K562 (cell line): ENCODE measurements at regions of chr2 and their contacts with region 1.

Region 1: DNA sequence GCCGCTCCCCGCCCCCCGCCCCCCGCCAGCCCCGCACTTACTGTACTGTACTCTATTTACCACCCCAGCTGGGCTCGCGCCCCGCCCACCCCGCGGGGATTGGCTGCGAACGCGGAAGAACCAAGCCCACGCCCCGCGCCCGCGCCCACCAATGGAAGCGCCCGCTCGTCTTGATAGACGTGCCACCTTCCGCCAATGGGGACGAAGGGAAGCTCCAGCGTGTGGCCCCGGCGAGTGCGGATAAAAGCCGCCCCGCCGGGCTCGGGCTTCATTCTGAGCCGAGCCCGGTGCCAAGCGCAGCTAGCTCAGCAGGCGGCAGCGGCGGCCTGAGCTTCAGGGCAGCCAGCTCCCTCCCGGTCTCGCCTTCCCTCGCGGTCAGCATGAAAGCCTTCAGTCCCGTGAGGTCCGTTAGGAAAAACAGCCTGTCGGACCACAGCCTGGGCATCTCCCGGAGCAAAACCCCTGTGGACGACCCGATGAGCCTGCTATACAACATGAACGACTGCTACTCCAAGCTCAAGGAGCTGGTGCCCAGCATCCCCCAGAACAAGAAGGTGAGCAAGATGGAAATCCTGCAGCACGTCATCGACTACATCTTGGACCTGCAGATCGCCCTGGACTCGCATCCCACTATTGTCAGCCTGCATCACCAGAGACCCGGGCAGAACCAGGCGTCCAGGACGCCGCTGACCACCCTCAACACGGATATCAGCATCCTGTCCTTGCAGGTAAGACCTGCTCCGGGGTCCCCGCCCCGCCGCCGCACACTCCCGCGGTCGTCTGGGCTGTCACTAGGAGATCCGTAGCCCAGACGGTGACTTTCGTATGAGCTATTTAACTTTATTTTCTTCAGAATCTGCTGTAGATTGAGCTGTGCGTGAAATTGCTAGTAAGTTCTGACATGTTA is at the start of gene ID2:
- DNase-seq: peak; percentile 97 to 99 (median 98)
- ATAC-seq: peak; percentile 75
- H3K4me3 ChIP-seq: peak within 1 kb of the TSS; percentile 68
- H3K27ac ChIP-seq: peak within 1 kb of the TSS; percentile 56; the same call in 2 of the 3 replicates
- H3K4me1 ChIP-seq: peaks cover 34 to 47% of the 10 kb centered on the region in 2 experiments
- H3K27me3 ChIP-seq: no peaks in the 10 kb centered on the region
- CTCF ChIP-seq: 0 out of 6 replicates have a peak, but pooled peaks of 1 of the 3 experiments have one; percentile 3
- EP300 ChIP-seq: 0 out of 2 replicates have a peak, but pooled peaks have one; percentile 5
- POLR2A ChIP-seq: peak; percentile 99
- RAD21 ChIP-seq: peak in 1 of 2 experiments; percentile 32; a peak in 2 of 4 replicates
- polyA plus RNA-seq, gene ID2: 17.4 to 23.1 TPM

Region 2: DNA sequence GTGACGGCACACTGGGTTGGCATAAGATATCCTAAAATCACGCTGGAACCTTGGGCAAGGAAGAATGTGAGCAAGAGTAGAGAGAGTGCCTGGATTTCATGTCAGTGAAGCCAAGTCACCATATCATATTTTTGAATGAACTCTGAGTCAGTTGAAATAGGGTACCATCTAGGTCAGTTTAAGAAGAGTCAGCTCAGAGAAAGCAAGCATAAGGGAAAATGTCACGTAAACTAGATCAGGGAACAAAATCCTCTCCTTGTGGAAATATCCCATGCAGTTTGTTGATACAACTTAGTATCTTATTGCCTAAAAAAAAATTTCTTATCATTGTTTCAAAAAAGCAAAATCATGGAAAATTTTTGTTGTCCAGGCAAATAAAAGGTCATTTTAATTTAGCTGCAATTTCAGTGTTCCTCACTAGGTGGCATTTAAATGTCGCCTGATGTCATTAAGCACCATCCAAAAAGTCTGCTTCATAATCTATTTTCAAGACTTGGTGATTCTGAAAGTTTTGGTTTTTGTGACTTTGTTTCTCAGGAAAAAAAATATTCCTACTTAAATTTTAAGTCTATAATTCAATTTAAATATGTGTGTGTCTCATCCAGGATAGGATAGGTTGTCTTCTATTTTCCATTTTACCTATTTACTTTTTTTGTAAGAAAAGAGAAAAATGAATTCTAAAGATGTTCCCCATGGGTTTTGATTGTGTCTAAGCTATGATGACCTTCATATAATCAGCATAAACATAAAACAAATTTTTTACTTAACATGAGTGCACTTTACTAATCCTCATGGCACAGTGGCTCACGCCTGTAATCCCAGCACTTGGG is 1784.9 kb before region 1 on chr2:
- CTCF ChIA-PET with region 1: no interaction called
- POLR2A ChIA-PET with region 1: no interaction called
- in situ Hi-C with region 1: no loop called
- intact Hi-C with region 1: loop called (anchors 5 kb)
- DNase-seq: peak in 3 of 4 experiments; percentile 36 to 67 (median 39)
- ATAC-seq: peak; percentile 63
- H3K4me3 ChIP-seq: no peak overlapping the region
- H3K27ac ChIP-seq: no peak overlapping the region
- H3K4me1 ChIP-seq: peaks cover 4 to 13% of the 10 kb centered on the region in 2 experiments; a peak in 4 of 5 replicates
- H3K27me3 ChIP-seq: no peaks in the 10 kb centered on the region
- CTCF ChIP-seq: peak; percentile 48 to 87 (median 64); a peak in 5 of 6 replicates
- EP300 ChIP-seq: no peak
- POLR2A ChIP-seq: no peak
- RAD21 ChIP-seq: peak; percentile 84 to 90

Region 3: DNA sequence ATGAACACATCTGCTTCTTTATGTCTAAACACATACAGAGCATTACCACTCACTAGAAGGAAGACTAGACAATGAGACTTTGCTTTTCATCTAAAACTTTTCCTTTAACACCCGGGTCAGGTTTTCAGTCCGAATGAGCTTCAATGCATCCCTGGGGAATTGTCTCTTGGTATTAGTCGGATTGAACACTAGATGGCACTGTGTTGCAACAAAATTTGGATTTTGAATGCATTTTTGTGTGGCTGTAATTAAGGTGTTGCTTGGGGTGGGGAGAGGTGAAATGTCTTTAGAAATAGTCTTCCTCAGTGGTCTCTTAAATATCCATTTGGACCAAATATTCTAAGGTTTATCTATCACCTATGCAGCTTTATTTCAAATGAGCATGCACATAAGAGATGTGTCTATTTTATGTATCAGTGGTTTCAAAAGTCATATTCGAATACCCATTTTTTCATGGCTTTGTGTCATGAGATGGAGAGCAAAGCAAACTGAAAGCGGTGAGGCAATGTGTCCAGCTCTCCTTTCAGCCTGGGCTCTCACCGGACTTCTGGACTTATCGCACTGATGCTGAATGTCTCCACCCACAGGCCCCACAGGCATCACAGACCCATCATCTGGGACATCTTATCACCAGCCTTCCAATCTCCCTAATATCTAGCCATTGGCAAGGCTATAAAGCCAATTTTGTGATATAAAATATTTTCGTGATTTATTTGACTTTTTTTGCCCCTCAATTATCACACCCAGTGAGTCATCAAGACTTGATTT is 1254.6 kb before region 1 on chr2:
- CTCF ChIA-PET with region 1: interaction called, 3 read pairs
- POLR2A ChIA-PET with region 1: interaction called, 3 read pairs
- in situ Hi-C with region 1: loop called (anchors 10 kb)
- intact Hi-C with region 1: loop called (anchors 2 kb)
- DNase-seq: peak; percentile 51 to 55 (median 54)
- ATAC-seq: peak; percentile 85
- H3K4me3 ChIP-seq: no peak overlapping the region
- H3K27ac ChIP-seq: no peak overlapping the region
- H3K4me1 ChIP-seq: peaks cover 0 to 7% of the 10 kb centered on the region in 2 experiments; a peak in 1 of 5 replicates
- H3K27me3 ChIP-seq: peaks cover 0 to 17% of the 10 kb centered on the region in 2 experiments; a peak in 1 of 5 replicates
- CTCF ChIP-seq: peak; percentile 52 to 68 (median 60); a peak in 5 of 6 replicates
- EP300 ChIP-seq: no peak
- POLR2A ChIP-seq: no peak
- RAD21 ChIP-seq: peak; percentile 71 to 73

Region 4: DNA sequence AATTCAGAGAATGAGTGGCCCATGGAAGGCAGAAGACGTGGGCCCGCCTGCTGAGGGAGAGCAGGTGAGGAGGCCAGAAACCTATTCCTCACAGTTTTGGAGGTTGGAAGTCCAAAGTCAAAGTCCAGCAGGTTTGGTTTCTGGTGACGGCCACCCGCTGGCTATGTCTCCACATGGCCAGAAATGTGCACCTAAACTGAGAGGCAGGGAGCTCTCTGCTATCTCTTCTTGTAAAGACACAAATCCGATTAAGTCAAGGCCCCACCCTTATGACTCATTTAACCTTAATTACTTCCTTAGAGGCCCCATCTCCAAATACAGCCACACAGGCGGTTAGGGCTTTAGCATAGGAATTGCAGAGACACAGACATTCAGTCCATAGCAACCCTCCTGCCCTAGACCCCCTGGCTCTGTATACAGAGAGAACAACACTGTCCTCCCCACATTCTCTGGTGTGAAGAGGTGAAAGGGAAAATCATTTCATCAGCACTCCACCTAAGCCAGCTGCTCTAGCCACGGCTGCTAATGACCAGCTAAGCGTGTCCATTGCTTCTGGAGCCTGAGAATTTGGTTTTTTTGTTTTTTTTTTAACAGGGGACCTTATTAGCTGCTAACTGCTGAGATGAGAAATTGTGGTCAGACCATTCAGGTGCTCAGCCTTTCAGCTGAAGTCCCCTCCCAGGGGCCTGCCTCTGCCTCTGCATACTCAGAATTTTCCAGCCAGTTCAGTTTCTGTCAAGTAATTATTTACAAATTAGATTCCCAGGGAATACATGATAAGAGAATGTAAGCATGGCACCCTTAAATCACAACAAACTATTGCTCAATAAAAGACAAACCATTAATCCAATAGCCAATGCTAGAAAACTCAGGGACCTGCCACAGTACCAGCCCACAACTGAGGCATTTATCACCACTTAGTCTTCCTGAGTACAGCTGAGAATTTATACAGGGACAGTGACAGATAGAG is 368.9 kb before region 1 on chr2:
- CTCF ChIA-PET with region 1: no interaction called
- POLR2A ChIA-PET with region 1: interaction called, 3 read pairs
- in situ Hi-C with region 1: no loop called
- intact Hi-C with region 1: loop called (anchors 10 kb)
- DNase-seq: peak; percentile 59 to 70 (median 59)
- ATAC-seq: peak; percentile 79
- H3K4me3 ChIP-seq: no peak overlapping the region
- H3K27ac ChIP-seq: peak overlapping the region; percentile 57; the same call in 2 of the 3 replicates
- H3K4me1 ChIP-seq: peaks cover 17 to 37% of the 10 kb centered on the region in 2 experiments
- H3K27me3 ChIP-seq: peaks cover 0 to 26% of the 10 kb centered on the region in 2 experiments; a peak in 3 of 5 replicates
- CTCF ChIP-seq: no peak
- EP300 ChIP-seq: peak; percentile 59; the same call in 1 of the 2 replicates
- POLR2A ChIP-seq: no peak
- RAD21 ChIP-seq: no peak

Region 5: DNA sequence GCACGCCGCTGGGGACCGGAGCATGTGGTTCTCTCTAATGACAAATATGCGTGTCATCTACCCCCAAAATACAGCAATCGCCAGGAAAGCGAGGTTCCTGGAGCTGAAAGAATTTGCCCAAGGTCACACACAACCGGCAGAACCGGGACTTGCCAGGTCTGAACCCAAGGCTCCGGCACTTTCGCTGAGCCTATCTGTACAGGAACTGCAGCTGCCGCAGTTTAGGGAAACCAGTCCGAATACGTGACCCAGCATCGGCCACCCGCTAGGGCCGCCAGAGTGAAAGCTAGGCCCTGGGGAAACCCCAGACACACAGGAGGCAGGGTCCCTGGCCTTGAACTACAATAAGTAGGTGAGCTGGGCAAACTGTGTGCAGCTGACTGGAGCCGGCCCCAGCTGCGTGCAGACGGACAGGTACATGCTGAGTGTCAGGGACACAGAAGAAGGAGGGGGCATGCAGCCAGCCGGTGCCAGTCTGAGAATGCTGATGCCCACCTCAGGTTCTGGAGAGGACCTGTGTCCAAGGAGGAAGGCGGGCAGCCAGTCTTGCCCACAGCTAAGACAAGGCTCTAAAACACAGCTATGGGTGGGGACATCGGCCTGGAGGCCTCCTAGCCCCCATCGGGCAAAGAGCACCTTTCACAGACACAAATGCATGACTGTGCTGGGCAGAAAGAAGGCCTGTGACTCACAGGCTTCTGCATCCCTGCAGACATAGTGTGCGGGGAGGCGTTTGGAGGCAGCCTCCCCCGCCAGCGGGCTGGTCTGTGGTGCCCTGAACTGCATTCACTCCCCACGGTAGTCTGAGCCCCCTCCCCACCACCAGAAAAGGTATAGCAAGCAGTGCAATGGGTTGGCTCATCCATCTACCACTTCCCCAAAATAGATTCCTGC is 107.6 kb before region 1 on chr2:
- CTCF ChIA-PET with region 1: no interaction called
- POLR2A ChIA-PET with region 1: interaction called, 10 read pairs
- in situ Hi-C with region 1: no loop called
- intact Hi-C with region 1: no loop called
- DNase-seq: no peak
- ATAC-seq: no peak
- H3K4me3 ChIP-seq: no peak overlapping the region
- H3K27ac ChIP-seq: no peak overlapping the region
- H3K4me1 ChIP-seq: peaks cover 6 to 13% of the 10 kb centered on the region in 2 experiments; a peak in 1 of 5 replicates
- H3K27me3 ChIP-seq: peaks cover 12 to 82% of the 10 kb centered on the region in 2 experiments
- CTCF ChIP-seq: no peak
- EP300 ChIP-seq: no peak
- POLR2A ChIP-seq: no peak
- RAD21 ChIP-seq: no peak

Region 6: DNA sequence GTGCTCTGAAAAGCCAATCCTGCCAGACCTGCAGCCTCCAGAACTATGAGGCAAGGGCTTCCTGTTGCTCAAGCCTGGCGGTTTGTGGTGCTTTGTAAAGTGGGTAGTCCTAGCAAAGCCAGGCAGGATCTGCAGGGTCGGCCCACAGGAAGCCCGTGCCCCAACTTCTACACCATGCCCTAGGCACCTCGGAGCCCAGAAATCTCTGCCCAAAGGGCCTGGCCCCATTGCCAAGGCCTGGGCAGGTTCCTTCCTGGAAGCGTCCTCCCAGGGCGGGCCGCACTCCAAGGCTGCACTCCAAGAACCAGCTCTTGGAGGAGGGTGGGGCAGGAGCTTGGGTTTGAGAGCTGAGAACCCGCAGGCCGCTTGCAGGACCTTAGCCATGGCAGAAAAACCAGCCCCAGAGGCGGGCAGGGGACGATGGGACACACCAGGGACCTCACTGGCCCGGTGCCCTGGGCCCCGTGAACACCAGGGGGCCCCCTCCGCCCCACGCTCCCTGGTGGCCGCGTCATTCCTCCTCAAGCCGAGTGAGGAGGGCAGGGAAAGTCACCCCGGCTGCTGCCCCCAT is 37.3 kb before region 1 on chr2:
- CTCF ChIA-PET with region 1: interaction called, 3 read pairs
- POLR2A ChIA-PET with region 1: interaction called, 17 read pairs
- in situ Hi-C with region 1: no loop called
- intact Hi-C with region 1: loop called (anchors 2 kb)
- DNase-seq: peak; percentile 64 to 79 (median 76)
- ATAC-seq: peak; percentile 97
- H3K4me3 ChIP-seq: no peak overlapping the region
- H3K27ac ChIP-seq: no peak overlapping the region
- H3K4me1 ChIP-seq: peaks cover 3 to 24% of the 10 kb centered on the region in 2 experiments; a peak in 3 of 5 replicates
- H3K27me3 ChIP-seq: peaks cover 13 to 19% of the 10 kb centered on the region in 2 experiments; a peak in 4 of 5 replicates
- CTCF ChIP-seq: peak; percentile 78 to 94 (median 80)
- EP300 ChIP-seq: no peak
- POLR2A ChIP-seq: no peak
- RAD21 ChIP-seq: peak; percentile 52 to 73